Colonic mucosa (tissue), 4 donors: ENCODE measurements at regions of chr10 and their contacts with region 1.

Region 1: GRCh38 chr10:78047314-78047891 is 13.7 kb downstream of the RPS24 start:
- DNase-seq: peak; percentile 91
- H3K4me3 ChIP-seq: no peak overlapping the region
- H3K27ac ChIP-seq: no peak overlapping the region
- H3K4me1 ChIP-seq: no peaks in the 10 kb centered on the region
- H3K27me3 ChIP-seq: no peaks in the 10 kb centered on the region
- CTCF ChIP-seq: peak; percentile 87

Region 2: DNA sequence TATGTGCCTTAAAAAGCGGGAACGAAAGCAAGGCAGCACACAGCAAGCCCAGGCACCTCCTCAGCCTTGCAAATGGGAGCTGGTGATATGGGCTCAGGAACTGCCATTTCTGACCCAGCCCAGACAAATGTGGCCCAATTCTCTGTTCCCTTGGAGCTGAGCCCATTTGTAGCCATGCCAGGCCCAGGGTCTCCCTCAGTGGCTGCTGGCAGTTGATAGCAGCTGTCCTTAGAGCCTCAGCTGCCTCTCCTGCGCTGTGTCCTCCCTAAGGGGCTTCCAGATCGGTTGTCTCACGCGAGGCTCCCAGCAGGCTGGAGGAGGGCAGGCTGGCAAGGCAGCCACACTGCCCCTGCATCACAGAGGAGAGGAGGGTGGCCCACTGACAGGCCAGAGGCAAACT is 685.6 kb before region 1 on chr10:
- intact Hi-C with region 1: no loop called
- DNase-seq: no peak
- H3K4me3 ChIP-seq: no peak overlapping the region
- H3K27ac ChIP-seq: no peak overlapping the region
- H3K4me1 ChIP-seq: no peaks in the 10 kb centered on the region
- H3K27me3 ChIP-seq: no peaks in the 10 kb centered on the region
- CTCF ChIP-seq: no peak

Region 3: DNA sequence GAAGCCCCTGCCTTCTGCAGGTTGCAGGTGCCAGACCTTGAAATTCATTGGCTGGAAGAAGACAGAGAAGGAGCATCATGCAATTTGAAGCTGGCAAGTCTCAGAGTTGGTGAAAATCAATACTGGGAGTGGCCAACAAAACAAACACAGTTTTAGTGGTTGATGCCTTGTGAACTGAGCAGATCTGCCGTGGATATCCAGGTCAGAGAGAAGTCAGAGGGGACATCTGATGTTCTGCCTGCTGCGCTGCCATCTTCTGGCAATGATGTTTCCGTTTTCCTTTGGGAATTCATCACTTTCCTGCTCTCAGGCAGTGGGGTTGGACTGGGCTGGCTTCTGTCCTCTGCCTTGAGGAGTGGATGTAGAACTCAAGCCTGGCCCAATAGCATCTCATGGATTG is 118.2 kb after region 1 on chr10:
- intact Hi-C with region 1: loop called (anchors 5 kb)
- DNase-seq: no peak
- H3K4me3 ChIP-seq: no peak overlapping the region
- H3K27ac ChIP-seq: no peak overlapping the region
- H3K4me1 ChIP-seq: no peaks in the 10 kb centered on the region
- H3K27me3 ChIP-seq: no peaks in the 10 kb centered on the region
- CTCF ChIP-seq: no peak

Region 4: GRCh38 chr10:78266741-78267469 is 219.5 kb after region 1 on chr10:
- intact Hi-C with region 1: no loop called
- DNase-seq: no peak
- H3K4me3 ChIP-seq: no peak overlapping the region
- H3K27ac ChIP-seq: no peak overlapping the region
- H3K4me1 ChIP-seq: no peaks in the 10 kb centered on the region
- H3K27me3 ChIP-seq: no peaks in the 10 kb centered on the region
- CTCF ChIP-seq: no peak

Region 5: GRCh38 chr10:78302989-78303854 is 255.8 kb after region 1 on chr10:
- intact Hi-C with region 1: loop called (anchors 10 kb)
- DNase-seq: peak; percentile 95
- H3K4me3 ChIP-seq: peak overlapping the region; percentile 46
- H3K27ac ChIP-seq: peak overlapping the region; percentile 85
- H3K4me1 ChIP-seq: no peaks in the 10 kb centered on the region
- H3K27me3 ChIP-seq: no peaks in the 10 kb centered on the region
- CTCF ChIP-seq: peak; percentile 79

Region 6: GRCh38 chr10:78458983-78459638 is 411.7 kb after region 1 on chr10:
- intact Hi-C with region 1: no loop called
- DNase-seq: no peak
- H3K4me3 ChIP-seq: no peak overlapping the region
- H3K27ac ChIP-seq: no peak overlapping the region
- H3K4me1 ChIP-seq: no peaks in the 10 kb centered on the region
- H3K27me3 ChIP-seq: no peaks in the 10 kb centered on the region
- CTCF ChIP-seq: no peak

Region 7: DNA sequence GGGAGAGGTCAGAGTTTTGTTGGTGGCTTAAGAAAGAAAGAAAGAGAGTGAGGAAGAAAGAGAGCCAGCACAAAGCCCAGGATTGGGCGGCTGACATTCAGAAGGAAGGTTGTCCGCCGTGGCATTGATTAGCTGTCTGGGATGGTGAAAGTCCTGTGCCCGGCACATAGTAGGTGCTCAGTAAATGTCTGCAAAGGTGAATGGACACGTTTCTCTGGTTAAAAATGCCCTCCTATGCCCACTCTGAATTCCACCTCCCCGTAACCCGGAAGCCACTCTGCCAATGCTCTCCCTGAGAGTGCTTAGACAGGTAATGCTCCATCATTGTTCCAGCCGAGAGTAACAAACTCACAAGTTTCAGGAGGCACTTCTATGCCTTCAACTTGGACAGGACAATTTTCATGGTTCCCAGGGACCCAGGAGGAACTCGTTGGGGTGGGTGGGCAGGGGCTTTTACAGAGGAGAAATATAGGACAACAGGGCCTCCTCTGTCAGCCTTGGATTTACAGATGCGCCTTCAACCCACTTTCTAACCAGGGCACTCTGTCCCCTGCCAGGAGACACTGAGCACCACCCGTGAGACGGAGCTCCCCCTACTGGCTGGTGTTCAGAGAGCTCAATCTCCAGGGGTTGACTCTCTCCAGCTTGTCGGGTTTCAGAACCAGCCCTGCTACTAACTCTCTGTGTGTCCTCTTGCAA is 609.9 kb after region 1 on chr10:
- intact Hi-C with region 1: loop called (anchors 5 kb)
- DNase-seq: peak; percentile 89
- H3K4me3 ChIP-seq: no peak overlapping the region
- H3K27ac ChIP-seq: no peak overlapping the region
- H3K4me1 ChIP-seq: no peaks in the 10 kb centered on the region
- H3K27me3 ChIP-seq: no peaks in the 10 kb centered on the region
- CTCF ChIP-seq: peak; percentile 60